ENCODE measurements at regions of chr3 and their contacts with region 1.

Region 1: GRCh38 chr3:49703443-49703927 is 14.1 kb downstream of the RNF123 start:
- DNase-seq: peak; percentile 46 to 85 (median 64)
- ATAC-seq: peak; percentile 100
- H3K4me3 ChIP-seq: no peak overlapping the region
- H3K4me3 Mint-ChIP-seq: no peak overlapping the region
- H3K27ac ChIP-seq: no peak overlapping the region
- H3K27ac Mint-ChIP-seq: no peak overlapping the region
- H3K4me1 ChIP-seq: peaks cover 5% of the 10 kb centered on the region
- H3K4me1 Mint-ChIP-seq: peaks cover 6% of the 10 kb centered on the region
- H3K27me3 ChIP-seq: no peaks in the 10 kb centered on the region
- H3K27me3 Mint-ChIP-seq: no peaks in the 10 kb centered on the region
- CTCF ChIP-seq: peak; percentile 75

Region 2: DNA sequence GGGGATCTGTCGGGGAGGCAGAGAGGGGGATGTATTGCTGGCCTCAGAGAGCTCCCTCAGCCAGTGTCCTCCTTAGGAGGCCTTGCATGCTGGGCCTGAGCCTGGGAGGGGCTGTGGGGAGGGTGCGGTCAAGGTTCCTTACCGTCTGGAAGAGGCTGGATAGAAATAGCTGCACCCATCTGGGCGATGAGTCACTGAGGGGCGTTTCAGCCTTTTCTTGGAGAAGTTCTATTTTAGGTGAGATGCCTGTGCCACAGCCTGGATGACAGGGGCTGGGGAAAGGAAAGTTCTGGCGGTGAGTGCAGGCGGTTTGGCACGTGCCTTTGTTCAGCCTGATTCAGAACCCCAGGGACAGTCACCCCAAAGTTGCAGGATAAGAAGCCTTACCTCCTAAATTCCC is 65.0 kb before region 1 on chr3:
- CTCF ChIA-PET with region 1: no interaction called
- POLR2A ChIA-PET with region 1: no interaction called
- intact Hi-C with region 1: no loop called
- DNase-seq: no peak
- ATAC-seq: no peak
- H3K4me3 ChIP-seq: no peak overlapping the region
- H3K4me3 Mint-ChIP-seq: no peak overlapping the region
- H3K27ac ChIP-seq: no peak overlapping the region
- H3K27ac Mint-ChIP-seq: no peak overlapping the region
- H3K4me1 ChIP-seq: no peaks in the 10 kb centered on the region
- H3K4me1 Mint-ChIP-seq: no peaks in the 10 kb centered on the region
- H3K27me3 ChIP-seq: no peaks in the 10 kb centered on the region
- H3K27me3 Mint-ChIP-seq: no peaks in the 10 kb centered on the region
- CTCF ChIP-seq: no peak

Region 3: DNA sequence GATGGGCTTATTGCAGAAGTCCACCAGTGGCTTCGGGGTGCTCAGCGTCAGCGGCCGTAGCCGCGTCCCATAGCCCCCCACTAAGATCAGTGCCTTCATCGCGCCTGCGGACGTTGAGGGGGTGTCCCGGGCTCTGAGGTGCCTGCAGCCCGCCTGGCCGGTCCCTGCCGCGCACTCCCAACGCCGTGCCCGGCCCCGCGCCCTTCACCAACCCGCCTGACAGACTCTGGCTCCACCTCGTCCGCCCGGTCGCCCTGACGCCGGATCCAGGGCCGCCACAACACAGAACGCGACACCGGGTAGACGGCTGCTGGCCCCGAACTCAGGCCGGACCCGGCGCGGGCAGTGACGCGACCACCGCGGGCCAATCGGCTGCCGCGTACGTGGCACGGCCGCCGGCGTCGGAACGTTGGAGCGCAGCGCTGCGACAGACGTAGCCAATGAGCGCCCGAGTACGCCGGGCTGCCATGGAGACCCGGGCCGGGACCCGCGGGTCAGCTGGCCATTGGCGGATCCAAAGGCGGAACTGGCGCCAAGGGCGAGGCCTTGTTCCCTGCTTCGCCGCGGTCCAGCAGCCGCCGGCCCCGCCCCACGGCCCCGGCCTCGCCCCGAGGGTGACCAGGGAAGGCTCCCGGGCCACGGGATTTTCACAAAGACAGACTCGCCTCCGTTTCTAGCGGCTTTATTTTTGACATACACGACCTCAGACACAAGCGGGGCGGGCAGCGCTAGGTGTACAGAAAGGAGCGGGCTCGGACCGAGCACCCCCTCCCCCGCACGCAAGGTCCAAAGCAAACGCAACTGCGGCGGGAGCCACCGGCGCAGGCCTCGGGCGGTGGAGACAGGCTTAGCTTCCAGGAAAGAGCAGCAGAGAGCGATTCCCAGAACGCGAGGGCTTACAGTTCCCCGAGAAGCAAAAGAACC is 20.4 kb after region 1 on chr3 and contains the start of gene GMPPB:
- CTCF ChIA-PET with region 1: interaction called, 4 read pairs
- POLR2A ChIA-PET with region 1: no interaction called
- intact Hi-C with region 1: loop called in 1 of 2 experiments (anchors 2 kb)
- DNase-seq: peak; percentile 81 to 96 (median 88)
- ATAC-seq: peak; percentile 70
- H3K4me3 ChIP-seq: peak within 1 kb of the TSS; percentile 99
- H3K4me3 Mint-ChIP-seq: peak within 1 kb of the TSS; percentile 98
- H3K27ac ChIP-seq: peak within 1 kb of the TSS; percentile 96 to 97
- H3K27ac Mint-ChIP-seq: peak within 1 kb of the TSS; percentile 93
- H3K4me1 ChIP-seq: peaks cover 37% of the 10 kb centered on the region
- H3K4me1 Mint-ChIP-seq: peaks cover 44% of the 10 kb centered on the region
- H3K27me3 ChIP-seq: no peaks in the 10 kb centered on the region
- H3K27me3 Mint-ChIP-seq: no peaks in the 10 kb centered on the region
- CTCF ChIP-seq: no peak
- total RNA-seq, gene GMPPB: 39.0 to 41.4 TPM

Region 4: GRCh38 chr3:49759226-49759625 is 55.7 kb after region 1 on chr3:
- CTCF ChIA-PET with region 1: no interaction called
- POLR2A ChIA-PET with region 1: no interaction called
- intact Hi-C with region 1: no loop called
- DNase-seq: no peak
- ATAC-seq: no peak
- H3K4me3 ChIP-seq: no peak overlapping the region
- H3K4me3 Mint-ChIP-seq: no peak overlapping the region
- H3K27ac ChIP-seq: no peak overlapping the region
- H3K27ac Mint-ChIP-seq: no peak overlapping the region
- H3K4me1 ChIP-seq: peaks cover 3% of the 10 kb centered on the region
- H3K4me1 Mint-ChIP-seq: peaks cover 40% of the 10 kb centered on the region
- H3K27me3 ChIP-seq: no peaks in the 10 kb centered on the region
- H3K27me3 Mint-ChIP-seq: no peaks in the 10 kb centered on the region
- CTCF ChIP-seq: no peak

Region 5: DNA sequence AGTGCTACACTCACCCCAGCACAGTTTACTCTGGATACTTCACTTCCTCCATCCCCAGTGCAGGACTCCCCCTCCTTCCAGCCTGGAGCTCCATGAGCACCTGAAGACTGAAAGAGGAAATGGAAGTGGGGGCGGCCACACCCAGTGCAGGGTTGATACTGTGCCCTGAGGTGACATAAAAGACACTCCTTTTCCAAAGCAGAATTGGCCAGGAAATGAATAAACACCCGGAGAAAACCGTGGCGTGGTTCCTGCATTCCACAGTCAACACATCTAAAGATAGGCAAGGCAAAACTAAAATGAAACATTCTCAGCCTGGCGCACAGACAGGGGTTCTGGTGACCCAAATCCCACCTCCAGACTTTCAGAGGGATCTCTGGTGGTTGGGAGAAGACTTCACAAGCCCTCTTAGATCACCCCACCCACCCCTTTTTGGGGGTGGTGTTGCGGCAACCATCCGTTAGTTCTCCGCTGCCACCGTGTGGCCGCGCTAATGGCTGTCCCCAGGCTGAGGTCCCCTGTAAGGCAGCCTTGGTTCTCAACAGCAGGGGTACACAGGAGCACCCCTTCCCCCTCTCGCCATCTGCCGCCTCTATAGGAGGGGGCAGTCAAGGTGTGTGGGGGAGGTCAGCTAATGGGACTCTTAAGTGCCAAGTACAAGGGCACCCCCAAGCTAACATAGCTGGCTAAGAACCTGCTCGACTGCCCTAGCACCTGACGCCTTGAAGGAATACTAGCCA is 202.7 kb after region 1 on chr3:
- CTCF ChIA-PET with region 1: interaction called, 4 read pairs
- POLR2A ChIA-PET with region 1: no interaction called
- intact Hi-C with region 1: loop called in 1 of 2 experiments (anchors 5 kb)
- DNase-seq: peak; percentile 15 to 77 (median 40)
- ATAC-seq: peak; percentile 43
- H3K4me3 ChIP-seq: no peak overlapping the region
- H3K4me3 Mint-ChIP-seq: peak overlapping the region; percentile 75
- H3K27ac ChIP-seq: peak overlapping the region in 1 of 2 donors; percentile 32
- H3K27ac Mint-ChIP-seq: peak overlapping the region; percentile 85
- H3K4me1 ChIP-seq: peaks cover 39% of the 10 kb centered on the region
- H3K4me1 Mint-ChIP-seq: peaks cover 33% of the 10 kb centered on the region
- H3K27me3 ChIP-seq: no peaks in the 10 kb centered on the region
- H3K27me3 Mint-ChIP-seq: no peaks in the 10 kb centered on the region
- CTCF ChIP-seq: peak; percentile 57

Measured in CD4-positive, alpha-beta T cell (primary cell).